GM13976 (cell line): ENCODE measurements at regions of chrX and their contacts with region 1.

Region 1: DNA sequence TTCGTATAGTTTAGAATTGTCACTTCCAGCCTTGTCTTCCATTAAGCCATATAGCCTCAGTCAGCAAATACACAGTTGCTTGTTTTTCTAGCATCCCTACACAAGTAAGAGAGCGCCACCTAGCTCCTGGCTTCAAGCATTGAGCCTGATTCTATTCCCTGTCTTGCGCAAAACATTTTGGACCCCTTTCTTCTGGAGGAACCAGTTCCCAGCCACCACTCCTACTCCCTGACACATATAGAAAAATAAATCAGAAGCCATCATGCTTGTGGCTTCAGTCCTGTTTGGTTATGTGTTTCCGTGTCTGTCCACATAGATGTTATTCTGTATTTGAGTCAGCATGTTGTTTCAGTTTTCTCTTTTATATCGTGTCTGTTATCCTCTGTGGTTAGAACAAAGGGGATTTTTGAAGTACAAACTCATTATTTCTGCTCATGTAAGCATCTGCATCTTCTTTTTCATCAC is 59.9 kb downstream of the GK start:
- DNase-seq: peak; percentile 71
- CTCF ChIP-seq: peak; percentile 35

Region 2: GRCh38 chrX:30388325-30388724 is 324.8 kb before region 1 on chrX:
- in situ Hi-C with region 1: no loop called
- DNase-seq: no peak
- CTCF ChIP-seq: no peak

Region 3: GRCh38 chrX:30570505-30570904 is 142.6 kb before region 1 on chrX:
- in situ Hi-C with region 1: loop called (anchors 10 kb)
- DNase-seq: peak; percentile 18
- CTCF ChIP-seq: no peak